ENCODE measurements at regions of chr20 and their contacts with region 1.

Region 1: GRCh38 chr20:32779500-32780211 is 17.5 kb downstream of the DNMT3B start:
- DNase-seq: no peak
- ATAC-seq: no peak
- H3K4me3 Mint-ChIP-seq: no peak overlapping the region
- H3K27ac Mint-ChIP-seq: no peak overlapping the region
- H3K4me1 Mint-ChIP-seq: peaks cover 4% of the 10 kb centered on the region
- H3K27me3 Mint-ChIP-seq: no peaks in the 10 kb centered on the region

Region 2: DNA sequence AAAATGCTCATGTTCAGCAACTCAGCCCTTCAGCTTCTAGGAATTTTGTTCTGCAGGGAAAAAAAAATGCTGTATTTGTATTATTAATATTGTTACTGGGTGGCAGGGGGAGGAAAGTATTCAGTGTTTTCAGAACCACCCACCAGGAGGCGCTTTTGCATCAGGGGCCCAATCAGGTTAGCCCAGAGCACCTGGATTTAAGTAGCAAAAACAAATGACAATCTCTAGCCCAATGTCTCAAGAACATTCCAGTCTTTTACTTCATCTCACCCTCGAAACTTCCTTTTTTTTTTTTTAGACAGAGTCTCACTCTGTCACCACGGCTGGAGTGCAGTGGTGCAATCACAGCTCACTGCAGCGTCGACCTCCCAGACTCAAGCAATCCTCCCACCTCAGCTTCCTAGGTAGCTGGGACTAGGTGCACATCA is 105.3 kb before region 1 on chr20:
- CTCF ChIA-PET with region 1: interaction called, 334 read pairs
- DNase-seq: peak; percentile 82
- ATAC-seq: peak; percentile 55
- H3K4me3 Mint-ChIP-seq: no peak overlapping the region
- H3K27ac Mint-ChIP-seq: peak overlapping the region; percentile 8
- H3K4me1 Mint-ChIP-seq: peaks cover 29% of the 10 kb centered on the region
- H3K27me3 Mint-ChIP-seq: no peaks in the 10 kb centered on the region

Region 3: DNA sequence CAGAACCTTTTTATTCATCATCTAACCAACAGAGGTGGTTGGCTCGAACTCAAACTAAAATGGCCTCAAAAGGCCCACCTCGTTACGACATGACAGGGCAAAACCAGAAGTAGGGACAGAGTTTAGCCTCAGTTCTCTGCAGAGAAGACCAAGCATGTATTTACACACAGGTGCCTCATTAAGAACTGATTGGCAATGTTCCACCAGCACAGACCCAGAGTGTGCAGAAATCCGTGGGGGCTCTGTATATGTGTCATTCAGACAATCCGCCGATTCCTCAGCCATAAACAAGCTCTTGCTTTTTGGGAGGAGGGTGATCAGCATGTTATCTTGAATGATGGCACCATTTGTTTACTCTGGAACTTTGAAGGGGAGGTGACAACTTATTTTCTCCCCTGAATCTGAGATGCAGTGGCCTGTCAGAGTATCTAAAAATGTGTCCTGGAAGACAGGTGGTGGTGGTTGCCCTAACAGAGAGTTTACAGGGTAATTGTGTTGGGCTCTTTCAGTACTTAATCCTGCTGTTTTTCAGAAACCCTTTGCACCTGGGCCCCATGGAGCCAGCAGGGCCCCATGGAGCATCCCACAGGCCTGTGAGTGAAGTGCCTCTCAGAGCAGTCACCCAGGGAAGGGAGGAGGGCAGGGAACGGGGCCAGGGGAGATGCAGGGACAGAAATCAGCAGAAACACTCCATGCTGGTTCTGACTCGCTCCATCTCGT is 76.8 kb before region 1 on chr20:
- CTCF ChIA-PET with region 1: interaction called, 12 read pairs
- DNase-seq: no peak
- ATAC-seq: no peak
- H3K4me3 Mint-ChIP-seq: no peak overlapping the region
- H3K27ac Mint-ChIP-seq: no peak overlapping the region
- H3K4me1 Mint-ChIP-seq: no peaks in the 10 kb centered on the region
- H3K27me3 Mint-ChIP-seq: no peaks in the 10 kb centered on the region

Region 4: GRCh38 chr20:32737371-32738223 is 42.1 kb before region 1 on chr20:
- CTCF ChIA-PET with region 1: interaction called, 34 read pairs
- DNase-seq: peak; percentile 68
- ATAC-seq: peak; percentile 89
- H3K4me3 Mint-ChIP-seq: no peak overlapping the region
- H3K27ac Mint-ChIP-seq: peak overlapping the region; percentile 87
- H3K4me1 Mint-ChIP-seq: peaks cover 47% of the 10 kb centered on the region
- H3K27me3 Mint-ChIP-seq: no peaks in the 10 kb centered on the region

Region 5: DNA sequence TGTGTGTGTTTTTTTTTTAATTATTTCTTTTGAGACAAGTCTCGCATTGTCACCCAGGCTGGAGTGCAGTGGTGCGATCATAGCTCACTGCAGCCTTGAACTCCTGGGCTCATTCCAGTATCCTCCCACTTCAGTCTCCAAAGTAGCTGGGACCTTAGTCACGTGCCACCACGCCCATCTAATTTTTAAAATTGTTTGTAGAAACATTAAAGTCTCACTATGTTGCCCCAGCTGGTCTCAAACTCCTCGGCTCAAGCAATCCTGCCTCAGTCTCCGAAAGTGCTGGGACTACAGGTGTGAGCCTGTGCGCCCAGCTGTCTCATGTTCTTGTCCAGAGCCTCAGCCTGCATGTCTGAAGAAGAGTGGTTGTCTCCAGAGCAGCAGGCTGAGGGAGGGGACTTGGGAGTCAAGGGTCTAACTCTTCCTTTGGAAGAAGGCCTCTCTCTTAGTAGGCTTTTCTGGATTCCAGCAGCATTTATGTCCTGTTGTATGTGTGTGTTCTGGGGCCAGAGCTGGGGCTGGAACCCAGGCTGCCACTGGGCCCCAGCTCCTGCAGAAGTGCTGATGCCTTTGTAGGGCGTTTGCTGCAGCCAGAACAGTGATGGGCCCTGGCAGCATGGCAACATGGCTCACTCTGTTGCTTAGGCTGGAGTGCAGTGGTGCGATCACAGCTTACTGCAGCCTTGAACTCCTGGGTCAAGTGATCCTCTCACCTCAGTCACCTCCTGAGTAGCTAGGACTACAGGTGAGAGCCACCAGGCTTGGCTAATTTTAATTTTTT is 12.0 kb before region 1 on chr20:
- CTCF ChIA-PET with region 1: interaction called, 37 read pairs
- DNase-seq: no peak
- ATAC-seq: no peak
- H3K4me3 Mint-ChIP-seq: no peak overlapping the region
- H3K27ac Mint-ChIP-seq: no peak overlapping the region
- H3K4me1 Mint-ChIP-seq: peaks cover 14% of the 10 kb centered on the region
- H3K27me3 Mint-ChIP-seq: peaks cover 9% of the 10 kb centered on the region

Measured in activated CD8-positive, alpha-beta memory T cell treated with anti-CD3 and anti-CD28 coated beads, Interleukin-2, amount 10 ng/mL, durations not matched to agents 7 days and 5 days (primary cell).